ENCODE measurements at regions of chr6 and their contacts with region 1.

Region 1: DNA sequence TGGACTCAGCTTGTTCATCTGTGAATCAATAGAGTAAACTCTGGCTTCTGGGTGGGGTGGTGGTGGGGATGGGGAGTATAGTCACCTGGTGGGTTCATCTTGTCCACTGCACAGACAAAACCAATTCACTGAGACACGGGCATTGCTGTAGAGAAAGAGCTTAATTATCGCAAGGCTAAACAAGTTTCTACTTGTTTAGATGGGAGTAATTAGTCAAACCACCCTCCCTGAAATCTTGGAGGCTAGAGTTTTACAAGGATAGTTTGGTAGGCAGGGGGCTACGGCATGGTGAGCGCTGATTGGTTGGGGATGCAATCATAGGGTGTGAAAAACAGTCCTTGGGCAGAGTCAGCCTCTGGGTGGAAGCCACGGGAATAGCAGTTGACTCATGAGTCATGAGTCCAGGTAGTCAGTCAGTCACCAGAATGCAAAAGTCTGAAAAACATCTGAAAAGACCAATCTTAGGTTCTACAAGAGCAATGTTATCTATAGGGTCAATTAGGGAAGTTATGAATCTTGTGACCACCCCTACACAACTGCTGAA is 77.8 kb downstream of the STMND1 start:
- DNase-seq: no peak

Region 2: DNA sequence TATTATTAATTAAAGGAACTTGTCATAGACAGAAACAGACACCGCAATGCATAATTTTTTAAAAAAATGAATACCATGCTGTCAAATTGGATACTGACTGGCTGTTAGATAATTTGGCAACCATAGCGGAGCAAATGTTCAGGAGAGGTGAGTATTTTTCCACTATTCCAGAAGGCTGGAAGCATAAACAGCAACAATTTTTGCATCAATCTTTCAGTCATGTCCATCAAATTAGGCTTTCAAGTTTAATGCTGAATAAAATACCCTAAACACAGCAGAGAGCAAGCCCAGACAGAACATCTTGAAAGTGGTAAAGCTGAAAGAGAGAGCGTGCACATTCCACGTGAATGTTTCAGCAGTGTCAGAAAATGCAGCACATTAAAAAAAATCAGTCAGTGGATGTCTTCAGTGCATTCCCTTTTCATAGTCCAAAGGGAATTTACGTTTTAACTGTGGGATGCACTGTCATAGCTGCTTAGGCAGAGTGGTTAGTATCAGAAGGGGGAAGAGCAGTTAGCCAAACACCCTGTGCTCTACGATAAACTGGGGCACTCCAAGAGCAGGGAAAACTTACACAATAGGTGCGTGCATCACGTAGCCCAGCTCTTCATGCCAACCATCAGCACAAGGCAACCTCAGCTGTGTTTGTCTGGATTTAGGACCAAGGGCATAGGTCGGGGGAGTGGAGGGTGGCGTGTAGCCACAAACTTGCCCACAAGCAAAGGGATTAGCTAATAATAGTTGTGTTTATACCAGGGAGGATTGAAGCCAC is 193.9 kb before region 1 on chr6:
- intact Hi-C with region 1: no loop called
- DNase-seq: no peak

Region 3: DNA sequence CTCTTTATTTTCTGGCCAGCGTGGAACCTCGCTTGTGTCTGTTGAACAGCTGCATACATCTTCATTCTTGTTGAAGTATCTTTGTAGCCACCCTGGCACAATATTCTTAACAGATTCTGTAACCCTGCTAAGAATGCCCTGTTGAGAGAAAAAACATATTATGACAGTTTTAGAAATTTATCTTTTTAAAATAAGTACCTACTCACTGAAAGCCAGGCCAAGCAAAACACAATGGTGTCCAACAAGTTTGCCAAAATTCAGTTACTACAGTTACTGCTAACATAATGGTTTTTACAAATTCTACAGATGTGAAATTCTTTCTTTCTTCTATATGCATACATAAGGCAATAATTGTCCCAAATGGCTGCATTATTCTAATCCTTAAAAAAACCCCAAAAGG is 508.9 kb after region 1 on chr6:
- intact Hi-C with region 1: no loop called
- DNase-seq: no peak

Region 4: DNA sequence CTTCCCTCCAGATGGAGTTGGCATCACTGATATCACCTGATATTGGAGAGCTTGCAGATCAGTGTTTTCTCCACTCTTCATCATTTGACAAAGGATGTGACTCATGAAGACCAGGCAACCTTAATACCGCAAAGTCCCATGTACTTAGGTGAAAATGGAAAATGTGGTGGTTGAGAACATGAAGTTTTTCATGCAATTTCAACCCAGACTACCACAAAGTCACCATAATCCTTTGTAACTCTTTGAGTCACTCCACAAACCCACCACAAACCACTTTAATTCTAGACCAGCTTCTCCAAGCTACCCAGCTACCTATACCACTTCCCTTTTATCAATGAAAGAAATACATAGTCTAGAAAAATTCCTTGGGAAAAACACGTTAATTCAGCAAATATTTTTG is 935.8 kb after region 1 on chr6:
- intact Hi-C with region 1: loop called in 1 of 2 experiments (anchors 10 kb)
- DNase-seq: no peak

Measured in posterior vena cava (tissue), 2 donors.